ENCODE measurements at regions of chr13 and their contacts with region 1.

Region 1: DNA sequence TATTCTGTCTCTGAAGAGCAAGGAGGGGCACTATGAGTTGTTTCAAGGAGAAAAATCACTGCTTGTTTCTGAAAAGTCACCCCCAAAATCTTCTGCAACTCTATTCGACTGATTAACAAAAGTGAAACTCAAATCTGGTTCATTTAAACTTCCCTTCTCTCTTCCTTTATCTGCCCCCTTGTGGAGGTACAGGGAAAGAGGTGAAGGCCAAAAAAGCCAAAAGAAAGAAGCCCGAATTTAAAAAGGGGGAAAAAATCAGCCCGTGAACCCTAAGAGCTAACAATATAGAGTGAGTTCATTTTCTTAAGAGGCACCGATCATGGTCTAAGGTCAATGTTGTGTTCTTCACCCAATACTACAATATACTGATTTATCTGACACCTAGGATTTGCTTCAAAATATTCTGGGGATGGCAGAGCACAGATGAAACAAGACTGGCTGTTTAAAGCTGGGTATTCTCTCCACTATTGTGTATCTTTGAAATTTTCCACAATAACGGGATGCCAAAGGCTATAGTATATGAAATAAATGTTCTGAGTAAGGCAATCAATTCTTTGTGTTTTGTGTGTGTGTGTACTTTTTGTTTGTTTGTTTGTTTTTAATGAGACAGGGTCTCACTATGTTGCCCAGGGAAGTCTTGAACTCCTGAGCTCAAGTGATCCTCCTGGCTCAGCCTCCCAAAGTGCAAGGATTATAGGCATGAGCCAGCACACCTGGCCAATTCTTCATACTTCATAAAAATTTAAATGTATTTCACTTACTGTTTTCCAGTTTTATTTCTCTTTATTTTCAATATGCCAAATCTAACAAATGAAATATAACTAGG is 55.0 kb upstream of the EEF1AKMT1 start:
- DNase-seq: peak; percentile 31
- H3K4me3 Mint-ChIP-seq: peak overlapping the region; percentile 41
- H3K27ac Mint-ChIP-seq: no peak overlapping the region
- H3K4me1 Mint-ChIP-seq: peaks cover 8% of the 10 kb centered on the region
- H3K27me3 Mint-ChIP-seq: no peaks in the 10 kb centered on the region

Region 2: DNA sequence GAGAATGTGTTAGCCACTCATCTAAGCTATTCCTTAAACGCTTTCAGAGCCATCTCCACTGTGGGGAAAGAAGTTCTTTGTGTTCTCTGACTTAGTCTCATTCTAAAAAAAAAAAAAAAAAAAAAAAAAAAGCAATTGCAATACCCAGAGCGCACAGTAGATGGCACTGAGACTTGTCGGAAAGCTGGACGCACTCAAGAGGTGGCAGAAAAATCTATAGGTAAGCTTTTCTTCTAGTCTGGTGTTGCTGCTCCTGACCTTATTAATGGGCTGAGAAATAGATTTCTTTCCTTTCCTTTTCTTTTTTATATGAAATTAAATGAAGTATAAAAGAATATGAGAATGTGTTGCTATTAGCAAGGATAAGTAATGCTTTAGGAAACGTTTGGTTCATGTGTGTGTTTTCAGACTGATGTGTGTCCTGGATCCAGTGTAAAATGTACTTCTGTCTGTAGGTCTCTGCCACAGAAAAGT is 631.4 kb before region 1 on chr13:
- CTCF ChIA-PET with region 1: interaction called, 12 read pairs
- POLR2A ChIA-PET with region 1: no interaction called
- DNase-seq: no peak
- H3K4me3 Mint-ChIP-seq: no peak overlapping the region
- H3K27ac Mint-ChIP-seq: no peak overlapping the region
- H3K4me1 Mint-ChIP-seq: peaks cover 22% of the 10 kb centered on the region
- H3K27me3 Mint-ChIP-seq: peaks cover 49% of the 10 kb centered on the region

Region 3: GRCh38 chr13:20713751-20714150 is 115.0 kb before region 1 on chr13:
- CTCF ChIA-PET with region 1: interaction called, 11 read pairs
- POLR2A ChIA-PET with region 1: no interaction called
- DNase-seq: no peak
- H3K4me3 Mint-ChIP-seq: no peak overlapping the region
- H3K27ac Mint-ChIP-seq: no peak overlapping the region
- H3K4me1 Mint-ChIP-seq: peaks cover 8% of the 10 kb centered on the region
- H3K27me3 Mint-ChIP-seq: peaks cover 12% of the 10 kb centered on the region

Region 4: GRCh38 chr13:20814224-20814910 is 14.4 kb before region 1 on chr13:
- CTCF ChIA-PET with region 1: interaction called, 16 read pairs
- POLR2A ChIA-PET with region 1: no interaction called
- DNase-seq: no peak
- H3K4me3 Mint-ChIP-seq: no peak overlapping the region
- H3K27ac Mint-ChIP-seq: no peak overlapping the region
- H3K4me1 Mint-ChIP-seq: no peaks in the 10 kb centered on the region
- H3K27me3 Mint-ChIP-seq: no peaks in the 10 kb centered on the region

Region 5: DNA sequence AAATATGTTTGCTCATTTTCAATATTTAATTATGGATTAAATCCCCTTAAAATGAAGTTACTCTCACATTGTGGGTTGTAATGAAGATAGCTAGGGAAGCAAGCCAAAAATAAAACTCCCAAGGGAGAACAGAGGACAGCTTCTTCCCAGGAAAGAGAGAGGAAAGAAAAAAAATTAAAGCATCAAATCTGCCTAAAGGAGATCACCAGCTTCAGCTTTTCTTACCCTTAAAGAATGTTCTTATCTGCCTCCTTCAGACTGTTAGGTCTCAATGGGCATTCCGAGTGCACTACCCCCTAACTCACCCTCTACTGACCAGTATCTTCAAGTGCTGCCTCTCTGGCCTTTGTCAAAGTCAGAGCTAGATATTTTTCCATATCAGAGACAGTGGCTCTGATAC is 18.5 kb after region 1 on chr13:
- CTCF ChIA-PET with region 1: interaction called, 11 read pairs
- POLR2A ChIA-PET with region 1: no interaction called
- DNase-seq: no peak
- H3K4me3 Mint-ChIP-seq: no peak overlapping the region
- H3K27ac Mint-ChIP-seq: no peak overlapping the region
- H3K4me1 Mint-ChIP-seq: no peaks in the 10 kb centered on the region
- H3K27me3 Mint-ChIP-seq: no peaks in the 10 kb centered on the region

Measured in activated CD4-positive, alpha-beta memory T cell treated with anti-CD3 and anti-CD28 coated beads, Interleukin-2, amount 10 ng/mL, durations not matched to agents 7 days and 5 days (primary cell).